Motor neuron (in vitro differentiated cells): ENCODE measurements at regions of chr12 and their contacts with region 1.

Region 1: GRCh38 chr12:127108360-127109215 is 1158.4 kb upstream of the TMEM132C start:
- ATAC-seq: peak in 3 of 8 experiments; percentile 97 to 98 (median 98)
- H3K4me3 ChIP-seq: no peak overlapping the region
- H3K27ac ChIP-seq: no peak overlapping the region
- H3K4me1 ChIP-seq: no peaks in the 10 kb centered on the region

Region 2: DNA sequence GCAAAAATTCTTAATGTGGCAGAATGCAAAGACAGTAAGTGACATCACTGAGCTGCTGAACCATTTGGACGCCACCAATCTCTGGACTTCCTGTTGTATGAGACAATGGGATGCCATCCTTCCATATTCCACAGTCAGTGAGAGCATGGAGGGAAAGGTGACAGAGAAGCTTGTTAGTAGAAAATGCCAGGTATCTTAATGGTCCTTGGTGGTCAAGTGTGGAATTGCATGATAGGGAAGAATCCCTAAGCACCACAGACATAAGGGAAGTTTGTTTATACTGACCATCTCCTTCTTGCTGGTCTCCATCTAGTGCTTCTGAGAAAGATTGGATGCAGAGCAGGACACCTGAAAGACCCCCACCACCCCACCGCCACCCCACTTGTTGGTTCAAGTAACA is 251.6 kb before region 1 on chr12:
- in situ Hi-C with region 1: no loop called
- ATAC-seq: no peak
- H3K4me3 ChIP-seq: no peak overlapping the region
- H3K27ac ChIP-seq: no peak overlapping the region
- H3K4me1 ChIP-seq: no peaks in the 10 kb centered on the region

Region 3: DNA sequence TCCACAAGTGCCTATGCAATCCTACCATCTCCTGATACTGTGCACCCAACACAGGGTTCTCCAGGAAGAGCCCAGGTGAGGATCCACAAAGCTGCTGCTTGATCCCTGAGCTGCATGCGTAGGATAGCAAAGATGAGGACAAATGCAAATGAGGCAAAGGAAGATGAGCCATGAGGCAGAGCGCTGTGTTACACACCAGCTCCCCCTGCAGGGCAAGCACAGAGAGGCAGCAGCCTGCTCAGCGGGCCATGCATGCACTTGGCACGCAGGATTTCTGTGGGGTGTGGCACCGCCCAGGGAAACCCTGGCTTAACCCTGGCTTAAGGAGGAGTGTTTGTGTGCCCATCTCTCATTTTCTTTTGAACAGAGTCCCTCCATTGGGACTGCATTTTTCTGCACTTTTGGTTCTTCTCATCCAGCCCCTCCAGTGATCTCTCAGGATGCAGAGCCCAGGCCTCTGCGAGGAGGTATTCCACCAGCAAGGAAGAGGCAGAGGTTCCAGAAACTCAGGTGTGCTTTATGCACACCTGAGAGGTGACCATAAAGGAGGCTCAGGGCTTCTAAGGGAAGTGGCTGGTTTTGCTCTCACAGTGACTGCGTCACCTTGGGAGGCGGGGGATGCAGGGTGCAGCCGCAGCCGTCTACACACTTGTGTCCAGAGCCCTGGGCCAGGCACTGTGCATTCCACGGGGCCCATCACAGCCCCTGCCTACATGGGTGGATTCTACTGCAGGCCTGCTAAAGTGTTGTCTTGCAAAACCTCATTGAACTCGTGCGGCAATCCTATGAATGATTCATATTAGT is 185.1 kb after region 1 on chr12:
- in situ Hi-C with region 1: loop called in 3 of 9 experiments (anchors 10 to 25 kb)
- ATAC-seq: peak in 5 of 8 experiments; percentile 61 to 99 (median 99)
- H3K4me3 ChIP-seq: no peak overlapping the region
- H3K27ac ChIP-seq: no peak overlapping the region
- H3K4me1 ChIP-seq: no peaks in the 10 kb centered on the region

Region 4: GRCh38 chr12:127363392-127363791 is 254.8 kb after region 1 on chr12:
- in situ Hi-C with region 1: loop called in 1 of 9 experiments (anchors 10 kb)
- ATAC-seq: peak in 3 of 8 experiments; percentile 30 to 58 (median 31)
- H3K4me3 ChIP-seq: no peak overlapping the region
- H3K27ac ChIP-seq: no peak overlapping the region
- H3K4me1 ChIP-seq: no peaks in the 10 kb centered on the region